ENCODE measurements at regions of chr3 and their contacts with region 1.

Region 1: GRCh38 chr3:185937689-185938463 is at the start of gene TRA2B:
- DNase-seq: peak; percentile 98
- ATAC-seq: peak; percentile 84
- H3K4me3 ChIP-seq: peak within 1 kb of the TSS; percentile 89
- H3K27ac ChIP-seq: peak within 1 kb of the TSS; percentile 88
- H3K4me1 ChIP-seq: peaks cover 45% of the 10 kb centered on the region
- H3K27me3 ChIP-seq: no peaks in the 10 kb centered on the region
- CTCF ChIP-seq: peak; percentile 31
- total RNA-seq, gene TRA2B: 279 and 287 TPM in 2 replicates

Region 2: GRCh38 chr3:186108941-186109865 is 171.3 kb after region 1 on chr3 and contains the start of gene ETV5:
- CTCF ChIA-PET with region 1: no interaction called
- POLR2A ChIA-PET with region 1: no interaction called
- intact Hi-C with region 1: loop called (anchors 2 kb)
- DNase-seq: peak; percentile 99
- ATAC-seq: peak; percentile 90
- H3K4me3 ChIP-seq: peak within 1 kb of the TSS; percentile 96
- H3K27ac ChIP-seq: peak within 1 kb of the TSS; percentile 56
- H3K4me1 ChIP-seq: peaks cover 21% of the 10 kb centered on the region
- H3K27me3 ChIP-seq: no peaks in the 10 kb centered on the region
- CTCF ChIP-seq: no peak
- total RNA-seq, gene ETV5: 41.4 and 60.6 TPM in 2 replicates